Aorta (tissue), 5 donors: ENCODE measurements at regions of chr2 and their contacts with region 1.

Region 1: DNA sequence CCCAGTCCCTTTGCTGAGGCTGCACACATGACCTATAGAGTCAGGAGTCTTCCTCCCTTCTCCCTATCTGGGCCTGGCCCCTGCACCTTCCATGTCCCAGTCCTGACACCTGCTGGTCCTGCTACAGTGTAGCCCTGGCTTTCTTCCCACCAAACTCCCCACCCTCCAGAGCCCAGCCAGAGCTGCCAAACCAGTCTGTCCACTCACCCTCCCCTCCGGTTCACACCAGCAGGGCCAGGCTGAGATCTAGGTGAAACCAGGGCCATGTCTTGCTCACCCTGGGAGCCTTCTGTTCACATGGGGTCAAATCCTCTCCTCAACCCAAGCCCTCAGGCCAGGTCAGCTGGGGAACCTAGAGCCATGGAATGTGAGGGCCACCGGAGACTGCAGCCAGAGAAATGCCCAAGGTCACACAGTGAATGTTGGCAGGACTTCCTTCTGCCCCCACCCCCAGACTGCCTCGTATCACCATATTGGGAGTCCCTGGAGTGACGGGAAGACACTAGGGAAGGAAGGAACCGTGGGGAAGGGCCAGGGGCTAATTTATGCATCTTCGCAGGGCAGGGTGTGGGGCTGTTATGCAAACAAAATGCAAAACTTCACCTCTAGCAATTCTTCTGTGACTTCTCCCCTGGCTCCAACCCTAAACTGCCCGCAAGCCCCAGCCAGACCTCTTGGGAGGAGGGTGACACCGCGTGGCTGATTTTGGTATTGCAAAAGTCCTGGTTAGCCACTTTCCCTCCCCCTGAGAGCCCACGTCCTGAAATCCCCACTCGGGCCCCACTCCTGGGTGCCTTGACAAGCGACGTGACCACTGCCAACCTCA is 14.6 kb downstream of the TNS1 start:
- DNase-seq: peak; percentile 88 to 94
- ATAC-seq: peak; percentile 89
- H3K4me3 ChIP-seq: no peak overlapping the region
- H3K27ac ChIP-seq: peak overlapping the region in 1 of 2 donors; percentile 13
- H3K4me1 ChIP-seq: no peaks in the 10 kb centered on the region
- H3K27me3 ChIP-seq: no peaks in the 10 kb centered on the region

Region 2: DNA sequence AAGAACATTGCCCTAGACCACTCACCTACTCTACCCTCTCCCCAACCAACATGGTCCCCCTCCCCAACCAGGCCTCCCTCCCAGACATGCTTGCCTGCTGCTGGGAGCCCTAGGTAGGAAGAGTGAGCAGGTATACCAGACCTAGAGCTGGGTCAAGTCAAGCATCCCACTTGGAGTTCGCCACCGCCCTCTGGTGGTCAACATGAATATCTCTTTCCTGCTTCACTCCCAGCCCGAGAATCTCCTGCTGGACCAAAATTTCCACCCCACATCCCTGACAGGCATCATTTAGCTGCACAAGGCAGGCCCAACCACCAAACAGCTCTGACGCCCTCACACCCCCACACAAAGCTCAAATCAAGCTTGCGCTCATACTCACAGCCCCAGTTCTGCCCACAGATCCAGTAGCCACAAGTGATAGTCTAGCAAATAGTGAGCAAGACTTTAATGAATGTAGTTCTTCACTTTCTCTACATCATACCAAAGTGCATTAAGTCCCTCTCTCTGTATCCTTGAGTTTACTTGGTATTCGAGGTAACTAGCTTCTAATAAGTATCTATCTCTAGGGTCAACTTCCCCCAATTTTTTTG is 101.4 kb before region 1 on chr2:
- intact Hi-C with region 1: loop called in 1 of 2 experiments (anchors 5 kb)
- DNase-seq: peak; percentile 83 to 90
- ATAC-seq: peak; percentile 65
- H3K4me3 ChIP-seq: no peak overlapping the region
- H3K27ac ChIP-seq: peak overlapping the region in 1 of 2 donors; percentile 48
- H3K4me1 ChIP-seq: no peaks in the 10 kb centered on the region
- H3K27me3 ChIP-seq: no peaks in the 10 kb centered on the region

Region 3: DNA sequence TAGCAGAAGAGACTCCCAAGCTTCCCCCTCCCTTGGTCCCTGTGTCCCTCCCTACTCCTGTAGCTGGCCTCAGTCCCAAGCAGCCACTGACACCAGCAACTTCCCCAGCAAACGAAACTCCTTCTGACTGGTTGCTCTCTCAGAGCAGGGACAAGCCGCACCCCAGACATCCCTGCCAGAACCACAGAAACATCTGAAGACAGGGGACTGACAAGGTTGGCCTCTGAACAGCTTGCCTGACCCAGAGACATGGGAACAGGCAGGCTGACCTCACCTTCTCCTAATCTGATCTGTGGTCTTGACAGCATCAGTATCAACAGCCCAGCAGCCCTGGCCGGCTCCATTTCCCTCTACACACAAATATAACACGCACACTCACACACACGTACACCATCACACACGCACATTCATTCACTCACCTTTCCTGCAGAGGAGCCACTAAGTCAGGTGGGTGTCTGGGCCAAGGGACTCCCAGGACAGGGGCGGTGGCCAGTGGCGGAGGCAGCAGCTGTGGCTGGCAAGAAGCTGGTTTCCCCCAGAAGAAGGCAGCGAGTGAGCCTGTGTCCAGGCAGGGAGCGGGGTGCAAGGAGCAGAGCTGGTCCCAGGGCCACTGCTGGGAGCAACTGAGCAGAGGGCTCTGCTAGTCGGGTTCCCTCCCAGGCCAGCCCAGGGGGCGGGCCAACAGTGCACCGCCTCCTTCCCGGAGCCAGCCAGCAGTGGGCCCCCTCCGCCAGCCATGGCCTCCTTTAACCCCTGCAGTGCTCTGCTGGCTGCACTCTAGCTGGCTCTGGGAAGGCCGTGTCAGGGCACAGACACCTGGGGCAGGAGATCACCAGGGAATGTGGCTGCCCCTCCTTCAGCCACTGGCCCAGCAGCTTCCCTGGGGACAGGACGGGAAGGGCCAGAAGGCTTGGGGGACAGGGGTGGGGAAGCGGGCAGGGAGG is 44.5 kb before region 1 on chr2:
- intact Hi-C with region 1: loop called (anchors 1 to 2 kb)
- DNase-seq: peak; percentile 93 to 94
- ATAC-seq: peak; percentile 88
- H3K4me3 ChIP-seq: peak overlapping the region; percentile 89 to 97
- H3K27ac ChIP-seq: peak overlapping the region; percentile 47 to 96
- H3K4me1 ChIP-seq: no peaks in the 10 kb centered on the region
- H3K27me3 ChIP-seq: no peaks in the 10 kb centered on the region